GM12878 (cell line): ENCODE measurements at regions of chr12 and their contacts with region 1.

Region 1: GRCh38 chr12:121260091-121260490 is 36.4 kb downstream of the CAMKK2 start:
- DNase-seq: no peak
- ATAC-seq: no peak
- H3K4me3 ChIP-seq: no peak overlapping the region
- H3K27ac ChIP-seq: no peak overlapping the region
- H3K4me1 ChIP-seq: peaks cover 5% of the 10 kb centered on the region
- H3K27me3 ChIP-seq: no peaks in the 10 kb centered on the region
- CTCF ChIP-seq: no peak
- EP300 ChIP-seq: no peak
- POLR2A ChIP-seq: no peak
- RAD21 ChIP-seq: no peak

Region 2: GRCh38 chr12:121248622-121249021 is 11.5 kb before region 1 on chr12:
- CTCF ChIA-PET with region 1: interaction called, 7 read pairs
- POLR2A ChIA-PET with region 1: interaction called, 18 read pairs
- RAD21 ChIA-PET with region 1: interaction called, 10 read pairs
- SMC1A ChIA-PET with region 1: interaction called, 20 read pairs
- in situ Hi-C with region 1: no loop called
- intact Hi-C with region 1: no loop called
- DNase-seq: peak; percentile 70
- ATAC-seq: peak; percentile 96
- H3K4me3 ChIP-seq: no peak overlapping the region
- H3K27ac ChIP-seq: peak overlapping the region; percentile 27
- H3K4me1 ChIP-seq: peaks cover 15% of the 10 kb centered on the region
- H3K27me3 ChIP-seq: no peaks in the 10 kb centered on the region
- CTCF ChIP-seq: no peak
- EP300 ChIP-seq: 0 out of 4 replicates have a peak, but pooled peaks of 1 of the 2 experiments have one; percentile 35
- POLR2A ChIP-seq: peak; percentile 63
- RAD21 ChIP-seq: no peak

Region 3: DNA sequence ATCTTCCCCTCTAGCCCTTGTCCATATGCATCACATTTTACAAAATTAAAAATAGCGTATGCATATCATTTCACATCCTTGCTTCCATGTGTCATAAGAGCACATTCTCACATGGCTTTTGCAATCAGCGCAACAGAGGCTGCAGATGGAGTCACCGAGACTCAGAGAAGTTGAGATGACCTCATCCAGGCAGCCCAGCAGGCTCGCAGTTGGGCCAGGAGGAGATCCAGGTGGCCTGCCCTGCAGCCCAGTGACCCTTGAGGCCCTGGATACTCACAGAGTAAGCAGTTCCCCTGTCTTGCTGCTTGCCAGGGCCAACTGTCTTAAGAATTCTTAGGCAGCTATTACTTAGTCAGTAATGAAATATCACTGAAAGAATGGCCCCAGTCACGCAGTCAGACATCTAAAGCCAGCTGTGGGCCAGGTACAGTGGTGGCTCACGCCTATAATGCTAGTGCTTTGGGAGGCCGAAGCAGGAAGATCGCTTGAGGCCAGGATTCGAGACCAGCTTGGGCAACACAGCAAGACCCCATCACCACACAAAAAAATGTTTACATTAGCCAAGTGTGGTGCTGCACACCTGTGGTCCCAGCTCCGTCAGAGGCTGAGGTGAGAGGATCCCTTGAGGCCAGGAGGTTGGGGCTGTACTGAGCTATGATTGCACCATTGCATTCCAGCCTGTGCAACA is 27.3 kb after region 1 on chr12:
- CTCF ChIA-PET with region 1: interaction called, 6 read pairs
- POLR2A ChIA-PET with region 1: interaction called, 12 read pairs
- RAD21 ChIA-PET with region 1: interaction called, 10 read pairs
- SMC1A ChIA-PET with region 1: interaction called, 5 read pairs
- in situ Hi-C with region 1: no loop called
- intact Hi-C with region 1: no loop called
- DNase-seq: no peak
- ATAC-seq: no peak
- H3K4me3 ChIP-seq: no peak overlapping the region
- H3K27ac ChIP-seq: no peak overlapping the region
- H3K4me1 ChIP-seq: peaks cover 9% of the 10 kb centered on the region
- H3K27me3 ChIP-seq: no peaks in the 10 kb centered on the region
- CTCF ChIP-seq: no peak
- EP300 ChIP-seq: no peak
- POLR2A ChIP-seq: no peak
- RAD21 ChIP-seq: no peak

Region 4: GRCh38 chr12:121296618-121297434 is 36.7 kb after region 1 on chr12 and contains the start of gene CAMKK2:
- CTCF ChIA-PET with region 1: interaction called, 4 read pairs
- POLR2A ChIA-PET with region 1: interaction called, 12 read pairs
- RAD21 ChIA-PET with region 1: interaction called, 15 read pairs
- SMC1A ChIA-PET with region 1: interaction called, 20 read pairs
- in situ Hi-C with region 1: no loop called
- intact Hi-C with region 1: loop called (anchors 2 kb)
- DNase-seq: no peak
- ATAC-seq: peak; percentile 80
- H3K4me3 ChIP-seq: peak within 1 kb of the TSS; percentile 99
- H3K27ac ChIP-seq: peak within 1 kb of the TSS; percentile 74
- H3K4me1 ChIP-seq: peaks cover 19% of the 10 kb centered on the region
- H3K27me3 ChIP-seq: no peaks in the 10 kb centered on the region
- CTCF ChIP-seq: peak in 2 of 3 experiments; percentile 20 to 23; a peak in 1 of 6 replicates
- EP300 ChIP-seq: no peak
- POLR2A ChIP-seq: peak; percentile 71
- RAD21 ChIP-seq: no peak
- polyA plus RNA-seq, gene CAMKK2: 5.2 to 5.3 TPM